Vagina (tissue), 2 donors: ENCODE measurements at regions of chr1 and their contacts with region 1.

Region 1: GRCh38 chr1:228486596-228487335 is 416 bp upstream of the RNF187 start:
- DNase-seq: no peak
- H3K4me3 ChIP-seq: peak overlapping the region; percentile 95 to 98
- H3K27ac ChIP-seq: peak overlapping the region; percentile 99
- H3K4me1 ChIP-seq: peaks cover 53% of the 10 kb centered on the region
- H3K27me3 ChIP-seq: no peaks in the 10 kb centered on the region
- CTCF ChIP-seq: peak in 1 of 3 experiments; percentile 15
- POLR2A ChIP-seq: peak in 1 of 2 donors; percentile 15

Region 2: DNA sequence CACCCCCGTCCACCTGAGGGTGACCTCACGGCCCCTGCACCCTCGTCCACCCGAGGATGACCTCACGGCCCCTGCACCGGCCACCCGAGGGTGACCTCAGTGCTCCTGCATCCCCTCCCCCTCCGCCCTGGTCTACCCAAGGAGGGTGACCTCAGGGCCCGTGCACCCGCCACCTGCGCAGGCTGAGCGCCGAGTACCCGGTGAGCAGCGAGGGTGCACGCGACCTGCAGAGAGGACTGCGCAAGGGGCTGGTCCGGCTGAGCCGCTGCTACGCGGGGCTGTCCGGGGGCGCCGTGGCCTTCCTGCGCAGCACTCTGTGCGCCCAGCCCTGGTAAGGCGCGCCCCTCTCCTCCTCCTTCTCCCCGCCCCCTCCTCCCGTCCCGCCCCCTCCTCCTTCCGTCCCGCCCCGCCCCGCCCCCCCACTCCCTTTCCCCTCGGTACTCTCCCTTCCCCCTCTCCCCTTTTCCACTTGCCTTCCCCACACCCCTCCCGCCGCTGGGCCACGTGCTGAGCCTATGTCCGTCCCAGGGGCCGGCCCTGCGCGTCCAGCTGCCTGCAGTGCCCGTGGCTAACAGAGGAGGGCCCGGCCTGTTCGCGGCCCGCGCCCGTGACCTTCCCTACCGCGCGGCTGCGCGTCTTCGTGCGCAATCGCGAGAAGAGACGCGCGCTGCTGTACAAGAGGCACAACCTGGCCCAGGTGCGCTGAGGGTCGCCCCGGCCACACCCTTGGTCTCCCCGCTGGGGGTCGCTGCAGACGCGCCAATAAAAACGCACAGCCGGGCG is 108.5 kb before region 1 on chr1:
- intact Hi-C with region 1: loop called (anchors 10 kb)
- DNase-seq: no peak
- H3K4me3 ChIP-seq: peak overlapping the region; percentile 49 to 62
- H3K27ac ChIP-seq: peak overlapping the region; percentile 92
- H3K4me1 ChIP-seq: peaks cover 25% of the 10 kb centered on the region
- H3K27me3 ChIP-seq: no peaks in the 10 kb centered on the region
- CTCF ChIP-seq: peak in 2 of 3 experiments; percentile 24 to 63
- POLR2A ChIP-seq: peak in 1 of 2 donors; percentile 32